ENCODE measurements at regions of chr1 and their contacts with region 1.

Region 1: DNA sequence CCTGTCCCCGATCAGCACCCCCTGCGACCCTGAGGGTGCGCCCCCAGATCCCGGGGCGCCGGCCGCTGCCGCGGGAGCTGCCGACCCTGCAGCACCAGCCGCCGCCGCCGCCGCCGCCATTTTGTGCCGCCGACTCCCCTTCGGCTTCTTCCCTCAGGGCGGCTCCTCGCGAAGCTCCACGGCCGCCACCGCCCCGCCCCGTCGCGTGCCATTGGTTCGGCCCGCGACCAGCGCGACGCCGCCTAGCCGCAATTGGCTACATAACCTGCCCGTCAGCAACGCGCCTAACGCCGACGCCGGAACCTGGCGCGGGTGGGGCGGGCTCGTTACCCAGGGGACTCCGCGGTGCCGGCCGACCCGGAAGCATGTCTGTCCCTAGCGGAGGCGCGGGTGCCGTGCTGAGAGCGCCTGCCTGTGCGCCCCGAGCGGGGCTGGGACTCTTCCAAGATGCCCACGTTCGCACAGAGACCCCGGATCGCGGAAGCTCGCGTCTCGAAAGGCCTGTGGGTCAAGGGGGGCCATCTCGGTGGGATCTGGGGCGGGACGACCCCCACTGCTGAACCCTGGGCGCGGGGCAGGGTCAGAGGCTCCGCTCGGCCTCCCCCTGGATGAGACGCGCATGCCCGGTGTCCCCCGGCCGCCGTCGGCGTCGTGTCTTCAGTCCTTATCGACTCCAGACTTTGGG is at the start of gene CCNL2:
- DNase-seq: peak; percentile 78
- H3K4me3 ChIP-seq: peak within 1 kb of the TSS; percentile 98
- CTCF ChIP-seq: peak; percentile 72

Region 2: GRCh38 chr1:1374929-1375662 is 24.2 kb before region 1 on chr1 and contains the start of gene AURKAIP1:
- CTCF ChIA-PET with region 1: interaction called, 20 read pairs
- POLR2A ChIA-PET with region 1: interaction called, 36 read pairs
- DNase-seq: peak; percentile 97
- H3K4me3 ChIP-seq: peak within 1 kb of the TSS; percentile 85
- CTCF ChIP-seq: peak; percentile 67

Region 3: GRCh38 chr1:1387098-1388077 is 11.9 kb before region 1 on chr1:
- CTCF ChIA-PET with region 1: interaction called, 66 read pairs
- POLR2A ChIA-PET with region 1: interaction called, 7 read pairs
- DNase-seq: no peak
- H3K4me3 ChIP-seq: no peak overlapping the region
- CTCF ChIP-seq: no peak

Region 4: GRCh38 chr1:1415751-1416150 is 16.4 kb after region 1 on chr1:
- CTCF ChIA-PET with region 1: interaction called, 17 read pairs
- POLR2A ChIA-PET with region 1: no interaction called
- DNase-seq: no peak
- H3K4me3 ChIP-seq: no peak overlapping the region
- CTCF ChIP-seq: no peak

Region 5: DNA sequence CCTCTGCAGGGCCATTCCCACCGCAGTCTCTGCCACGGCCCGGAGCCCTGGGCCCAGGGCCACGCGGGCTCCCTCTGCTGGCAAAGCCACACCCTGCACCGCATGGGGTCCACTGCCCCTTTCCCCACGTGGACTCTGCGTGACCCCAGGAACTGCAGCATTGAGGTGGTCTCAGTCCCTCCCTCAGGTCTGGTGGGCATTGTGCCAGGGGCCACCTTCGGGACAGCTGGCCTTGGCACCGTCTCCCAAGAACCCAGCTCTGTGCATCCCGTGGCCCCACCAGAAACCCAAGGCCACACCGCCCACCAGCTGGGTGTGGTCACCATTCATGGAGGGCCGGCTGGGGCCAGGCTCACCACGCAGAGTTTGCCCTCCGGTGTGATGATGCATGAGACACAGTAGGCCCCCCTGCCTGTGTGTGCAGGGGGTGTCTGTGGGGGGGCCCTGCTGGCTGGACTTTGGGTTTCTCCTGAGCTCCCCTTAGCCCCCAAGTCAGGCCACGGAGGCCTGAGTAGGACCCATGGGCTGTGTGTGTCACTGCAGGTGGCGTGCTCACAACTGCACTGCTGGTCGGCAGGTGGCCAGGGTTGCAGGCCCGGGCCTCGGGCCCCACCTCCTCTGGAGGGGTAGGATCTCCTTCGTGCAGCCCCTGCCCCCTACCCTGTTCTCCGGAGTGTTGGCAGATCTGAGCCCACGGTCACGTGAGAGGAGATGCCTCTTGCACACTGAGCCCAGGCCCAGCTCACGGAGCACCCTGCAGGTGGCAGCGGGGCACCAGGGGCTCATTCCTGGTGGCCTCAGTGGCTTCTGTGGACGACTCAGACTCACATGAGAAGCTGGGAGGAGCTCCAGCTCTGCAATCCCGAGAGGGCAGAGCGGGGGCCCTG is 41.9 kb after region 1 on chr1:
- CTCF ChIA-PET with region 1: interaction called, 18 read pairs
- POLR2A ChIA-PET with region 1: no interaction called
- DNase-seq: no peak
- H3K4me3 ChIP-seq: no peak overlapping the region
- CTCF ChIP-seq: peak; percentile 89

Region 6: DNA sequence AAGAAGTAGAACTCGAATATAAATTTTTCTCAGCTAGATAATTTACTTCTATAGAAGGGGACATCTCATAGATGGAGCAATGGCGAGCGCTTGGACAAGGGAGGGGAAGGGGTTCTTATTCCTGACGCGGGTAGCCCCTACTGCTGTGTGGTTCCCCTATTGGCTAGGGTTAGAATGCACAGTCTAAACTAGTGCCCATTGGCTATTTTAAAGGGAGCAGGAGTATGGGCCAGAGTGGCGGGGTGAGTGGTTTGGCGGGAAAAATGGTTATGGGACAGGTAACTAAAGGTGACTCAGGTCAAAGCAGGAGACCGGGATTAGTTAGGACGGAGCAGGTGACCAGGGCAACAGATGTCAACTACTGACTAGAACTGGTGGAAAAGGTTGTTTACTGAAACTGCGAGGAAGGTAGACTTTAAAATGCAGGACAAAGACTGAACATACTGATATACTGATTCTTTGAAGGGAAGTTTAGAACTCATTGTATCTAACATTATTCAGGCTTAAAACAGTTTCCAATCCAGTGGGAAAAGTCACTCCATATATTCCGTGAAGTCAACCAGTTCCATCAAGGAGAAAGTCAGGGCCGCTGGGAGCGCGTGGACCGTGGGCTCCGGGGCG is 111.7 kb after region 1 on chr1:
- CTCF ChIA-PET with region 1: interaction called, 13 read pairs
- POLR2A ChIA-PET with region 1: no interaction called
- DNase-seq: no peak
- H3K4me3 ChIP-seq: peak overlapping the region; percentile 93
- CTCF ChIP-seq: no peak

Measured in AG04449 (cell line).